Cardiac septum (tissue), 1 donor: ENCODE measurements at regions of chr1 and their contacts with region 1.

Region 1: DNA sequence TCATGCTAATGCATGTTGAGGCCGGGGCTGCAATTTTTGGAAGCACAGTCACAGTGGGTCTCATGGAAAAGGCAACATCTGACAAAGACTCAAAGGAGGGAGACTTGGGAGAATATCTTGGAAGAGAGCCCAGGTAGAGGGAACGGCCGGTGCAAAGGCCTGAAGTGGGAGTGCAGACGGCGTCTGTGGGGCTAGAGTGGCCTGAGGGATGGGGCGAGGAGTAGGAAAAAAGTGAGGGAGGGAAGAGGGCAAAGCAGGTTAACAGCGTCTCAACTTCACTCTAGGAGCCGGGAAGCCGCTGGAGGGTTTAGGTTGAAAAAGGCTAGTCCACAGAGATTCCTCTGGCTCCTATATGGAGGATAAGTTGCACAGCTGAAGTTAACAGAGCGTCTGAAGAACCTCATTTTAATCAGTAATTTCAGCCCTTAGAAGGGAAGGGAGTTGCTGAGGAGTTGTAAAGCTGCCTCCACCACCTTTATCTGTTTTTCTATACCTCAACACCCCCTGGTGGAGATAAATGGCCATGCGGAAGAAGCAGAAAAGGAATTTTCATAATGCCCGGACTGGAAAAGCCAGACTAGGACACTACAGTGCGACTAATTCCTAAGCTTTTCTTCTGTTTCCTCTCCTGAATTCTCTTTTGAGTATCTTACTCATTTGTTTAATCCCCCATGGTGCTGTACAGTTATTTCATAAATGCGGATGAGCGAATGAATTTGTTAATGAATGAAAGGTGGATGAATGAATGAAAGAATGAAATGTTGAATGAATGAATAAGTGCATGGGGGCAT is 78.7 kb upstream of the ZNF281 start:
- DNase-seq: no peak

Region 2: DNA sequence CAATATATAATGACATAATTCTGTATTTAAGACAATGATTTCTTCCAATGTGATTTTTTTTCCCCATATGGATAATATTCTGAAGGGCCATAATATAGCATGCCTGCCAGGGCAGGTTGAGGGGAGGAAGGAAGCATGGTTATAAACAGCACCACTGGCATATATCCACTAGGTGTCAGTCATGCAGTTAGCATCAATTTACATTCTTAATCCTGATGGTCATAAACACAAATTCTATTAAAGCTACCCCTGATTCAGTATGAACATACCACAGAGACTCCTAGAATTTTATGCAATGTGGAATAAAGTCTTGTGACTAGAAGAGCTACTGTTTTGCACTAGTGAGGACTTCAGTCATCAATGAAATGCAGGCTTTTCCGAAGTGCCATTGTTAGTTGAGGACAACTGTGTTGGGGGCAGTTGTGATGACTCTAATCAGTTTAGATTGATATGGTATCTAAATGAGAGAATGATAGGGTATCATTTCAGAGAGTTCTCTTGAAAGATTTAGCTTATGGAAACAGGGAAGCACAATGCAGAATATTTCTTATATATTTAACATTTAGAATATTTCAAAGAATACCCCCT is 803.8 kb before region 1 on chr1:
- intact Hi-C with region 1: loop called (anchors 5 kb)
- DNase-seq: no peak

Region 3: GRCh38 chr1:200139661-200140250 is 348.8 kb before region 1 on chr1:
- intact Hi-C with region 1: loop called (anchors 10 kb)
- DNase-seq: no peak

Region 4: DNA sequence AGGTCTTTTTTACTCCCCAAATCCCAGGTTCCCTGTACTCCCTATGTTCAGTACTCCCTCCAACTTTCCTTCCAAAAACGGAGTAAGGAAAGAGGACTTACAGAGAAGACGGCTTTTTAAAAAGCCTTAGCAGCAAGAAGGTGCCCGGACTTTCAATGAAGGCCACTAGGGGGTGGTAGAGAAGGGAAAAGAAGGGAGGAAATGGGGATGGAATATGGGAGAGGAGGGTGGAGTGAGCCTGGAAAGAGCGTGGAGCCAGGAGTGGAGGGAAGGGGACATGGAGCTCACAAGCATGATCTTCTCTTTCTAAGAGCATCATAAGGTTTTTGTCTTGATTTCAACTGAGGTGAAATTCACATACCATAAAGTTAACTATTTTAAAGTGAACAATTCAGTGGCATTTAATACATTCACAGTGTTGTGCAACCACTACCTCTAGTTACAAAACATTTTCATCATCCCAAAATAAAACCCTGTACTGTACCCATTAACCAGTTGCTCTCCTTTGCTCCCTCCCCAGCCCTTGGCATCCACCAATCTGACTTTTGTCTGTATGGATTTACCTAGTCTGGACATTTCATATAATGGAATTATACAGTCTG is 208.7 kb before region 1 on chr1:
- intact Hi-C with region 1: loop called (anchors 2 kb)
- DNase-seq: no peak

Region 5: DNA sequence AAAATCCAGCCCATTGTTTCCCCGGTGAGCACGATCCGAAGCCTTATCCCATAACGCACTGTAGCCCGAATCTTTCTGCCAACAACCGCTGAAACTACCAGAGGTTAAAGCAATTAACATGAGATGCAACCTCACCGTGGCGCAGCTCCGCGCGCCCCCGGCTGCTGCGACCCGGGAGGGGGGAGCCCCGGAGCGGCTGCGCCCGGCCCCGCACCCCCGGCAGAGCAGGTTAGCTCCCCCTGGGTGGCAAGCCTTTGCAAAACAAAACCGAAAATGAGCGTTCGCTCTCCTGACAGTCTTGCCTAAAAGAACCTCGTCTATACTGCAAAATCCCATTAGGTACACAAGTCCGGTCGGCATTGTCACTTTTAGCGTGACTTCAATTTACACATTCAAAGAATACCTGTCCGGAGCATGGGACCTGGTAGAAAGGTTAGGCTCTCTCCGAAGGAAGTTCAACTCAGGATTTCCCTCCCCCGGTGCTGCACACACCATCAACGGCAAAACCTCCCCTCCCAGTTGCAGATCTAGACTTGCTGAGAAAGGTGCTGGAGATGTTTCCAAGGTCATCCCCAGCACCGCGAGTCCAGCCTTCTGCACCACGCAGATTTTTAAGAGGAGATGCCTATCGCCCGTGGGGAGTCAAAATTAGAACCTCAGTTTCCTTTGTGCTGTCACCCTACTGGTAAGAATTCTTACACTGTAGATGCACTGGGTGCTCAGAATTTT is 186.2 kb before region 1 on chr1:
- intact Hi-C with region 1: loop called (anchors 5 kb)
- DNase-seq: peak; percentile 79

Region 6: GRCh38 chr1:200780545-200781369 is 292.2 kb after region 1 on chr1:
- intact Hi-C with region 1: no loop called
- DNase-seq: no peak